Ovary (tissue), 10 donors: ENCODE measurements at regions of chr19 and their contacts with region 1.

Region 1: GRCh38 chr19:18117692-18118378 is 20.3 kb downstream of the MAST3 start:
- DNase-seq: peak; percentile 87 to 96 (median 93)
- H3K4me3 ChIP-seq: peak overlapping the region; percentile 66
- H3K27ac ChIP-seq: peak overlapping the region; percentile 20 to 35
- H3K4me1 ChIP-seq: peaks cover 13% of the 10 kb centered on the region
- H3K27me3 ChIP-seq: no peaks in the 10 kb centered on the region
- CTCF ChIP-seq: no peak
- EP300 ChIP-seq: no peak
- POLR2A ChIP-seq: no peak

Region 2: GRCh38 chr19:18000935-18001778 is 116.7 kb before region 1 on chr19:
- intact Hi-C with region 1: no loop called
- DNase-seq: peak; percentile 72 to 84 (median 82)
- H3K4me3 ChIP-seq: peak overlapping the region; percentile 74
- H3K27ac ChIP-seq: peak overlapping the region; percentile 57 to 78
- H3K4me1 ChIP-seq: peaks cover 5% of the 10 kb centered on the region
- H3K27me3 ChIP-seq: no peaks in the 10 kb centered on the region
- CTCF ChIP-seq: no peak
- EP300 ChIP-seq: no peak
- POLR2A ChIP-seq: peak; percentile 31

Region 3: DNA sequence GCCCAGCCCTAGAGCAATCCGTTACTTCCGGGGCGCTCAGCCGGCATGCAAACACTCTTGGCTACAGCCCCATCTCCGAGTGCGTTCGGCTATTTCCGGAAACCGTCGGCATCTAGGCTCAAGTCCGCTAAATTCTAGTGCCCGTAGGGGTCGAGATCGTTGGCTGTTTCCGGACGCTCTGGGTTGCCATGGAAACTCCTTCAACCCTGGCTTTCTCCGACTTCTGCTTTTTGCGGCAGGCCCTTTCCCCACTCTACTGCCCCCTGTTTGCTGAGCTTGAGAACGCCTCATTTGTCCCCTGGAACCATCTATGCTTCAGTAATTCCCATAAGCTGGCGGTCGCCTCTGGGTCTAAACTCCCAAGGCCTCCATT is 34.6 kb after region 1 on chr19:
- intact Hi-C with region 1: loop called in 2 of 4 experiments (anchors 5 kb)
- DNase-seq: peak; percentile 94 to 99 (median 98)
- H3K4me3 ChIP-seq: peak overlapping the region; percentile 66
- H3K27ac ChIP-seq: peak overlapping the region; percentile 73 to 79
- H3K4me1 ChIP-seq: peaks cover 18% of the 10 kb centered on the region
- H3K27me3 ChIP-seq: no peaks in the 10 kb centered on the region
- CTCF ChIP-seq: peak; percentile 22 to 76 (median 74)
- EP300 ChIP-seq: no peak
- POLR2A ChIP-seq: peak; percentile 2

Region 4: GRCh38 chr19:18160971-18161635 is 43.3 kb after region 1 on chr19:
- intact Hi-C with region 1: loop called in 2 of 4 experiments (anchors 5 to 10 kb)
- DNase-seq: peak; percentile 66 to 86 (median 80)
- H3K4me3 ChIP-seq: peak overlapping the region; percentile 37
- H3K27ac ChIP-seq: peak overlapping the region; percentile 39 to 69
- H3K4me1 ChIP-seq: peaks cover 17% of the 10 kb centered on the region
- H3K27me3 ChIP-seq: no peaks in the 10 kb centered on the region
- CTCF ChIP-seq: peak; percentile 30 to 82 (median 64)
- EP300 ChIP-seq: no peak
- POLR2A ChIP-seq: no peak

Region 5: GRCh38 chr19:18179957-18180356 is 62.1 kb after region 1 on chr19:
- intact Hi-C with region 1: no loop called
- DNase-seq: no peak
- H3K4me3 ChIP-seq: no peak overlapping the region
- H3K27ac ChIP-seq: no peak overlapping the region
- H3K4me1 ChIP-seq: no peaks in the 10 kb centered on the region
- H3K27me3 ChIP-seq: no peaks in the 10 kb centered on the region
- CTCF ChIP-seq: no peak
- EP300 ChIP-seq: no peak
- POLR2A ChIP-seq: no peak

Region 6: GRCh38 chr19:18339723-18340122 is 221.9 kb after region 1 on chr19:
- intact Hi-C with region 1: loop called in 1 of 4 experiments (anchors 10 kb)
- DNase-seq: no peak
- H3K4me3 ChIP-seq: peak overlapping the region; percentile 79
- H3K27ac ChIP-seq: peak overlapping the region in 1 of 2 donors; percentile 87
- H3K4me1 ChIP-seq: peaks cover 6% of the 10 kb centered on the region
- H3K27me3 ChIP-seq: no peaks in the 10 kb centered on the region
- CTCF ChIP-seq: no peak
- EP300 ChIP-seq: no peak
- POLR2A ChIP-seq: no peak